H1 (cell line): ENCODE measurements at regions of chr4 and their contacts with region 1.

Region 1: DNA sequence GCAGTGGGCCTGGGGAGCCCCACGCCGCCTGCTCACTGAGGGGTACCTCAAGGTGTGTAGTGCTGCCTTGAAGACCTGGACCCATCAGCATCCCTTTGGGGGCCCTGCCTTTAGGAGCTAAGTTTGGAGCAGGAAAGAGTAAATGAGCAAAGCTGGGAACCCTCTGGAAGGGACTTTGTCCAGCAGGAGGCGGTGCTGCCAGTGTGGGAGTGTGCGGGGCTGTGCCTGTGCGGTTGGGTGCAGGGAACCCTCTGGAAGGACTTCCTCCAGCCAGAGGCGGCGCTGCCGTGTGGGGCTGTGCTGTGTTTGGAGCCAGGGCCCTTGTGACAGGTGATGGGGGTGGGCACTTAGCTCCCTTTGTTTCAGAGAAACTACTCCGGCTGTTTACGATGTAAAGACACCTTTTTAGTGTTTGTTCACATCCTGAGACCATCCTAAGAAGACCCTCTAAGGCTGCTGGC is 25.8 kb downstream of the RGS12 start:
- DNase-seq: peak; percentile 54 to 91
- H3K4me3 ChIP-seq: no peak overlapping the region
- H3K27ac ChIP-seq: 0 out of 2 replicates have a peak overlapping the region, but pooled peaks have one; percentile 39
- H3K4me1 ChIP-seq: peaks cover 0 to 5% (median 1%) of the 10 kb centered on the region in 4 experiments; a peak in 2 of 7 replicates
- H3K27me3 ChIP-seq: no peaks in the 10 kb centered on the region
- CTCF ChIP-seq: peak in 2 of 3 experiments; percentile 99; a peak in 3 of 4 replicates
- EP300 ChIP-seq: peak in 1 of 2 experiments; percentile 55; a peak in 1 of 3 replicates
- POLR2A ChIP-seq: no peak
- RAD21 ChIP-seq: peak; percentile 73 to 78

Region 2: DNA sequence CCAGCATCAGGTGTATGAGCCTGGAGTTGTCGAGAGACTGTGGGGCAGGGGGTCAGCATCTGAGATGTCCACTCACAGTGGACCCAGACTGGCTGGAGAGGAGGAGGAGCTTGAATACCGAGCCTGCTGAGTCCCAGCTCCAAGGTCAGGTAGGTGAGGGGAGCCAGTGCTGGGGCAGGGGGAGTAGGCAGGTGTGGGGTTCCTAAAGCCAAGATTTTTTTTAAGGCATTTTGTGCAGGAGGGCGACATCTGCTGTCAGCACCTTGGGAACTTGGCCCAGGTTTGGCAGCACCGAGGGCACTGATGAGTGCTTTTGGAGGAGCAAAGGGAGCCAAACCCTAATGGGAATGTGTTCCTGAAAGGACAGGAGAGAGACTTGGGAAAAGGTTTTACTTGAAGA is 133.9 kb before region 1 on chr4:
- CTCF ChIA-PET with region 1: no interaction called
- POLR2A ChIA-PET with region 1: no interaction called
- DNase-seq: no peak
- H3K4me3 ChIP-seq: no peak overlapping the region
- H3K27ac ChIP-seq: no peak overlapping the region
- H3K4me1 ChIP-seq: no peaks in the 10 kb centered on the region
- H3K27me3 ChIP-seq: no peaks in the 10 kb centered on the region
- CTCF ChIP-seq: peak; percentile 2 to 9 (median 5); a peak in 3 of 4 replicates
- EP300 ChIP-seq: no peak
- POLR2A ChIP-seq: no peak
- RAD21 ChIP-seq: peak; percentile 23 to 39; a peak in 3 of 4 replicates

Region 3: DNA sequence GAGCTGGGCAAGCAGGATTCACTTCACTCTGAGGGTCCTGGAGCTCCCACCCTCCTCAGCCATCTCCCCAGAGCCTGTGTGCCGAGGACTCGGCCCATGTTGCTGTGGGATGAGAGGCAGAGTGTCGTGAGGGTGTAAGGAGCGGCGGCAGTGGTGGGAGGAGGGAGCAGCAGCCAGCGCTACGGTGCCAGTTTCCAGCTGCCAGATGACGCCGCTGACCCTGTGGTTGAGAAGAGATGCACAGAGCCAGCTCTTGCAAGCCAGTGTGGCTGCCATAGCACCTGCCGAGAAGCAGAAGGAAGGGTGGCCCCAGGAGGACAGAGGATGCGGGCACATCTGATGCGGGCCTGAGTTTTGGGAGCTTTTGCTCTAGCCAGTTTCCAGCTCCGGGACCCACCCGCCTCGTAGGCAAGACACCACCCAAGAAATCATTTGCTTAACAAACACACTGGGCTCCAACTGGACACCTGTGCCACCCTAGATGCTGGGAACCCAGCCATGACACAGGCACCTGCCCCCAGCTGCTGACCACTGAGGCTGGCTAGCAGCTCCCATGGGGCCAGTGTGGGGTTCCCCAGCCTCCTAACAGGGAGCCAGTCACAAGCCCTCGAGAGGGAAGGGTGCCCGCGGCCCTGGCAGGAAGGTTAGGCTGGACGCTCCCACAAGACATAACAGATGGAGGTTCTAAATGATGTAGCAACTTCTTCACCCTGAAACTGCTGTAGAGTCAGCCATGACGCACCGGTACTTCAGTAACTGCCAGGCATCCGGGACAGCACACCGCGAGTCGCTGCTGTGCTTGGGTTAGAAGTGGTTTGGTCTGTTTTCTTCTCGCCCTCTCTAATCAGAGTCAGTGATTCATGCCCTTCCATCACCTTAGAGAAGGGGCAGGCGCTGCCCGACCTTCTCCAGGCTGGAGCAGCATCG is 60.8 kb before region 1 on chr4:
- CTCF ChIA-PET with region 1: interaction called, 11 read pairs
- POLR2A ChIA-PET with region 1: no interaction called
- DNase-seq: no peak
- H3K4me3 ChIP-seq: no peak overlapping the region
- H3K27ac ChIP-seq: no peak overlapping the region
- H3K4me1 ChIP-seq: no peaks in the 10 kb centered on the region; a peak in 1 of 7 replicates
- H3K27me3 ChIP-seq: no peaks in the 10 kb centered on the region; a peak in 1 of 7 replicates
- CTCF ChIP-seq: no peak
- EP300 ChIP-seq: no peak
- POLR2A ChIP-seq: no peak
- RAD21 ChIP-seq: no peak

Region 4: GRCh38 chr4:3292571-3293400 is 25.8 kb before region 1 on chr4 and contains the start of gene RGS12:
- CTCF ChIA-PET with region 1: interaction called, 31 read pairs
- POLR2A ChIA-PET with region 1: interaction called, 3 read pairs
- DNase-seq: peak; percentile 63 to 95
- H3K4me3 ChIP-seq: peak within 1 kb of the TSS; percentile 68 to 86 (median 80)
- H3K27ac ChIP-seq: no peak within 1 kb of the TSS
- H3K4me1 ChIP-seq: peaks cover 0 to 23% (median 11%) of the 10 kb centered on the region in 4 experiments; a peak in 5 of 7 replicates
- H3K27me3 ChIP-seq: peaks cover 0 to 12% (median 1%) of the 10 kb centered on the region in 4 experiments; a peak in 3 of 7 replicates
- CTCF ChIP-seq: no peak
- EP300 ChIP-seq: no peak
- POLR2A ChIP-seq: no peak
- RAD21 ChIP-seq: no peak
- total RNA-seq, gene RGS12: 16.3 and 16.4 TPM in 2 replicates

Region 5: DNA sequence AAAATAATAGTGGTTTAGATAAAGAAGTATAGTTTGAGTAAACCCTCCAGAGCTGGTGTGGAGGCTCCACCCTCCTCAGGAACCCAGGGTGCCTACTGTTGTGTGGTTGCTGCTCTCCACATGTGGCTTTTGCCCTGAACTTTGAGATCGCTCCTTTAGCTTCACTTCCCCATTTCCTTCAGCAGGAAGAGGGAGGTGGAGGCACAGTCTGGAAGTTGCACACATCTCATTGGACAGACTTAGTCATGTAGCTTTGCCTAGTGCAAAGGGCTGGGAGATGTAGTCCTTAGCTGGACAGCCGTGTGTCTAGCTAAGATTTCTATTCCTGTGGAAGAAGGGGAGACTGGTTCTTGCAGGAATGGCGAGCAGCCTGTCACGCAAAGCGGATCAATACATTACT is 12.1 kb after region 1 on chr4:
- CTCF ChIA-PET with region 1: interaction called, 124 read pairs
- POLR2A ChIA-PET with region 1: interaction called, 13 read pairs
- DNase-seq: no peak
- H3K4me3 ChIP-seq: no peak overlapping the region
- H3K27ac ChIP-seq: no peak overlapping the region
- H3K4me1 ChIP-seq: peaks cover 0 to 2% (median 0%) of the 10 kb centered on the region in 4 experiments; a peak in 3 of 7 replicates
- H3K27me3 ChIP-seq: no peaks in the 10 kb centered on the region
- CTCF ChIP-seq: no peak
- EP300 ChIP-seq: no peak
- POLR2A ChIP-seq: no peak
- RAD21 ChIP-seq: no peak

Region 6: DNA sequence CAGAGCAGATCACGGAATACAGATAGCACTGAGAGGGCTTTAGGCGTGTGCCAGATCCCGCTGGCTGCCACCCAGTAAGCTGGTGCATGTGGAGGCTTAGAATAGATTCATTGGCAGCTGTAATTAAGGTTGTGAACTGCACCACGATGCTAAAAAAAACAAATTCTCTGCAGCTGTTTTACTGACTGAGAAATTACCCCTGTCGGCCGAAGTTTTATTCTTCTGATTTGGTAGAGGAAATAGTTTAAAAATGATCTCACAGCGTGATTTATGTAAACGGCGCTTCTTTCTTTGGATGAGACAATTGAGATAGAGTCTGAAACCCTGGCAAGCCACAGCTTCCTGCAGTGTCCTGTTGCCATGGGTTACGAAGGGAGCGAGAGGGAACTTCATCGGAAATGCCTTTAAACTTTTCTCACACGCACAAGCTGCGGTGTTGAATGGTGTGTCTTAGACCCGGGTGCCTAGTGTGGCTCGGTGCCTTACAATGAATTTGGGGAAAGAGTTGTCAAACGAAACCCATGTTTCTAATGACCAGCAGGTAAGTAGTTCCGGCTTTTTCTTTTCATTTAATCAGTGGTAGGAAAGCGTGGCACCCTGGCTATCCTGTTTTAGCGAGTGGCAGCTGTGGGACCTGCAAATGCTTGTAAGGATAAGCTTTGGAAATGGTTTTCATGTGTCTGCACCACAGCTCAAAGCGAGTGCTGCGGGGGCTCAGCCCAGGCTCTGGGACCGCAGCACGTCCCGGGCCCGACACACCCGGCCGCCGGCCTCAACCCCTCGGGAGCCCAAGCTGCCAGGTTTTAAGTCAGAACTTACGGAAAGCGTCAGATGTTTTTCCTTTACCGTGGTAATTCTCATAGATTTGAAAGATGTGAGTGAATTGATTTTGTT is 51.4 kb after region 1 on chr4:
- CTCF ChIA-PET with region 1: interaction called, 16 read pairs
- POLR2A ChIA-PET with region 1: interaction called, 3 read pairs
- DNase-seq: peak in 1 of 2 experiments; percentile 54
- H3K4me3 ChIP-seq: peak overlapping the region in 3 of 4 experiments; percentile 8 to 47 (median 14); a peak in 5 of 8 replicates
- H3K27ac ChIP-seq: no peak overlapping the region
- H3K4me1 ChIP-seq: peaks cover 7 to 33% (median 21%) of the 10 kb centered on the region in 4 experiments
- H3K27me3 ChIP-seq: peaks cover 0 to 13% (median 10%) of the 10 kb centered on the region in 4 experiments; a peak in 3 of 7 replicates
- CTCF ChIP-seq: no peak
- EP300 ChIP-seq: no peak
- POLR2A ChIP-seq: no peak
- RAD21 ChIP-seq: no peak

Region 7: GRCh38 chr4:3426465-3427133 is 108.0 kb after region 1 on chr4:
- CTCF ChIA-PET with region 1: interaction called, 12 read pairs
- POLR2A ChIA-PET with region 1: no interaction called
- DNase-seq: no peak
- H3K4me3 ChIP-seq: no peak overlapping the region
- H3K27ac ChIP-seq: no peak overlapping the region
- H3K4me1 ChIP-seq: no peaks in the 10 kb centered on the region; a peak in 1 of 7 replicates
- H3K27me3 ChIP-seq: no peaks in the 10 kb centered on the region; a peak in 1 of 7 replicates
- CTCF ChIP-seq: no peak
- EP300 ChIP-seq: no peak
- POLR2A ChIP-seq: no peak
- RAD21 ChIP-seq: no peak

Region 8: DNA sequence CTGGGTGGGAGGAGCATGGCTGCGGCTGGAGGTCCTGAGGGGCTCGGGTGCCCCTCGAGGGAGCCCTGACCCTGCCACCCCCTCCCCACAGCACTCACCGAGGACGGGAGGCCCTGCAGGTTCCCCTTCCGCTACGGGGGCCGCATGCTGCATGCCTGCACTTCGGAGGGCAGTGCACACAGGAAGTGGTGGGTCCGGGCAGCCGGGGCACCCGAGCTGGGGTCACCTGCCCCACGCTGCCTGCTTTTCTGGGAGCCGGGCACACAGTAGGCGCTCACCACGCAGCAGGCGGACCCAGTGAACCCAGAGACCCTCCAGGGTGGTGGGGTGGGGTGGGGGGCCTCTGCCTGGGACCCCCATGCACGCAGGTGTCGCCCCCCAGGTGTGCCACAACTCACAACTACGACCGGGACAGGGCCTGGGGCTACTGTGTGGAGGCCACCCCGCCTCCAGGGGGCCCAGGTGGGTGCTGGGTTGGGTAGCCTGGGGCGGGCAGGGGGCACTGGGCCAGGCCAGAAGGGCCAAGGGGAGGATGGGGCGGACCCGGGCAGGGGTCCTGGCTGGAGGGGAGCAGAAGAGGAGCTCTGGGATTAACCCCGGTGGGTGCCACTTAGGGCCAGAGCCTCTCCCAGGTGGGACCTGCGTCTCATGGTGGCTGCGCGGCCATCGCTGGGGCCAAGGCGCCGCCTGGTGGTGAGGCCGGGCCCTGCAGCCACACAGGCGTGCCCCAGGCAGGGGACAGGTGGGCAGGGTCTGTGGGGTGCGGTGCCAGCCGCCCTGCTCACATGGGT is 124.6 kb after region 1 on chr4:
- CTCF ChIA-PET with region 1: interaction called, 37 read pairs
- POLR2A ChIA-PET with region 1: no interaction called
- DNase-seq: peak in 1 of 2 experiments; percentile 93
- H3K4me3 ChIP-seq: no peak overlapping the region
- H3K27ac ChIP-seq: no peak overlapping the region
- H3K4me1 ChIP-seq: no peaks in the 10 kb centered on the region
- H3K27me3 ChIP-seq: no peaks in the 10 kb centered on the region
- CTCF ChIP-seq: peak in 2 of 3 experiments; percentile 96 to 97; a peak in 3 of 4 replicates
- EP300 ChIP-seq: no peak
- POLR2A ChIP-seq: no peak
- RAD21 ChIP-seq: peak; percentile 96 to 97